ENCODE measurements at regions of chr10 and their contacts with region 1.

Region 1: DNA sequence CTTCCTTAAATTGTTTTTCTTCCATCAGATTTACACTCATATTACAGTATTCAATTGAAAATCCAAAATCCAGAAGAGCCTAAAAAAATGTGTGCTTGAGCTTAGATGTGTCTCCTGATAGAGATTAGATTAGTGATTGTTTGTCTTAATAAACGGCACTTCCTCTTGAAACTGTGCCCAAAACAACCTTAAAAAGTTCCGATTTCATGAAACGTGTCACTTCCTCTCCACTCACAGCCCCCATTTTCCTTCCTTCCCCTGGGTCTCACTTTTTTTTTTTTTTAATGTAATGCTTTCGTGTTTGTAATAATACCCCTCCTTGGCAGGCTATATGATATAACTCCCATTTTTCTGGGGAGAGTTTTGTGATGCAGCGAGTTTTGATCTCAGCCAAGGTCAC is 114.8 kb upstream of the ADO start:
- DNase-seq: peak in 2 of 9 experiments; percentile 62 to 83
- ATAC-seq: peak; percentile 44
- H3K4me3 ChIP-seq: peak overlapping the region in 1 of 2 experiments; percentile 21
- H3K4me3 Mint-ChIP-seq: peak overlapping the region; percentile 60
- H3K27ac ChIP-seq: peak overlapping the region in 1 of 2 experiments; percentile 81
- H3K27ac Mint-ChIP-seq: peak overlapping the region; percentile 82
- H3K4me1 ChIP-seq: peaks cover 31% of the 10 kb centered on the region
- H3K4me1 Mint-ChIP-seq: peaks cover 46% of the 10 kb centered on the region
- H3K27me3 ChIP-seq: no peaks in the 10 kb centered on the region
- H3K27me3 Mint-ChIP-seq: no peaks in the 10 kb centered on the region
- CTCF ChIP-seq: no peak

Region 2: GRCh38 chr10:62666275-62666674 is 23.4 kb before region 1 on chr10:
- CTCF ChIA-PET with region 1: no interaction called
- POLR2A ChIA-PET with region 1: no interaction called
- intact Hi-C with region 1: no loop called
- DNase-seq: no peak
- ATAC-seq: no peak
- H3K4me3 ChIP-seq: no peak overlapping the region
- H3K4me3 Mint-ChIP-seq: no peak overlapping the region
- H3K27ac ChIP-seq: no peak overlapping the region
- H3K27ac Mint-ChIP-seq: no peak overlapping the region
- H3K4me1 ChIP-seq: no peaks in the 10 kb centered on the region
- H3K4me1 Mint-ChIP-seq: peaks cover 2% of the 10 kb centered on the region
- H3K27me3 ChIP-seq: no peaks in the 10 kb centered on the region
- H3K27me3 Mint-ChIP-seq: no peaks in the 10 kb centered on the region
- CTCF ChIP-seq: no peak

Region 3: GRCh38 chr10:62804356-62805230 is 114.9 kb after region 1 on chr10 and contains the start of gene ADO:
- CTCF ChIA-PET with region 1: no interaction called
- POLR2A ChIA-PET with region 1: no interaction called
- intact Hi-C with region 1: loop called in 1 of 2 experiments (anchors 5 kb)
- DNase-seq: peak; percentile 52 to 90 (median 78)
- ATAC-seq: peak; percentile 88
- H3K4me3 ChIP-seq: peak within 1 kb of the TSS; percentile 88 to 89
- H3K4me3 Mint-ChIP-seq: peak within 1 kb of the TSS; percentile 97
- H3K27ac ChIP-seq: peak within 1 kb of the TSS; percentile 76 to 98
- H3K27ac Mint-ChIP-seq: peak within 1 kb of the TSS; percentile 99
- H3K4me1 ChIP-seq: peaks cover 29% of the 10 kb centered on the region
- H3K4me1 Mint-ChIP-seq: peaks cover 40% of the 10 kb centered on the region
- H3K27me3 ChIP-seq: no peaks in the 10 kb centered on the region
- H3K27me3 Mint-ChIP-seq: no peaks in the 10 kb centered on the region
- CTCF ChIP-seq: no peak
- total RNA-seq, gene ADO: 12.7 to 13.1 TPM